Activated CD4-positive, alpha-beta T cell treated with anti-CD3 and anti-CD28 coated beads for 36 hours (primary cell): ENCODE measurements at regions of chr1 and their contacts with region 1.

Region 1: DNA sequence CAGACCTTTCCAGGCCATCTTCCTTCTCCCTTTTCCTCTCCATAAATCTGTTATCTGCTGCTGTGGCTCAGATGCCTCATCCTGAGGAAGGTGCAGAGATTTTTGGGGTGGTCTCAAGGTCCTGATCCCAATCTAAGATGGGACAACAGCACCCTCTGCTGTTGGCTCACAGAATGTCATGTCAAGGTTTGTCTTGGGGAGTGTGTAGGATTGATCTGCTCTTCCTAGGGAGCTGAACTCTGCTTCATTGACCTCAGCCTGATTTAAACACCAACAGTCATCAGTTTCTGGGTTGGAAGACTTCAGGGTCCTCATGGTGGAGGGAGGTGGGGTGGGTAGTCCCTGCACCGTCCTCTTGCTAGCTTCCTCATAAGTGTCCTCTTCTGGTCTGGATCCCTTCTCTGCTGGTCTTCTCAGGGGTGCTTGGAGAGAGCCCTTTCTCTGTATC is 62.8 kb upstream of the LAX1 start:
- DNase-seq: peak; percentile 75
- ATAC-seq: peak; percentile 79
- H3K4me3 Mint-ChIP-seq: no peak overlapping the region
- H3K27ac Mint-ChIP-seq: peak overlapping the region; percentile 76
- H3K4me1 Mint-ChIP-seq: peaks cover 2% of the 10 kb centered on the region
- H3K27me3 Mint-ChIP-seq: no peaks in the 10 kb centered on the region

Region 2: DNA sequence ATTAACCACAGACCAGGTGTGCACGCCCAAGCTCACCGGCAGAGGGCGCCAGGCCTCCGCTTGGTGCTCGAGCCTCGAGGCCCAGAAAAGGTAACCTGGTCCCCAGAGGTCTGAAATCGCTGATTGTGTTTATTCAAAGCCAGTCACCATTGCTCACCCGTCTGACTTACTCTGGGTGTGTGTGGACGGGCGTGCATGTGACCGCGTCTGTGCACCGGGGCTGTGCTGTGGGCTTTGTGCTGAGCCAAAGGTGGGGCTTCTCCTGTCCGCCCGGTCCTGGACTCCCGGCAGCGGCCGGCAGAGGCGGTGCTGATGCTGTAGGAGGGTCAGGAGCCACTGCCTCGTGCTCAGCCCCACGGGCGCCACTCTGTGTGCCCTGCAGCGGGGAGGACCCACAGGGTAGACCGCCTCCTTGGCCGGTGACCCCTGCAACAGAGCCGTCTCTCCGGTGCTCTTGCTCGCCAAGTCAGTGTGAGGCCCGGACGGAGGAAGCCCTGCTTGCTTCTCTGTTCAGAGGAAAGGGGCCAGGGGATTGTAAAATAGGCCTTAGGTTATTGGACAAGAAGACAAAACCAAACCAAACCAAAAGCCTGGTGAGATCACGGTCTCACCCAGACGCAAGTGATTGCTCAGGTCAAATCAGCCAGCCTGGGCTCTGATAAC is 428.8 kb before region 1 on chr1:
- CTCF ChIA-PET with region 1: no interaction called
- POLR2A ChIA-PET with region 1: no interaction called
- intact Hi-C with region 1: loop called in 1 of 2 experiments (anchors 5 kb)
- DNase-seq: peak; percentile 96
- ATAC-seq: peak; percentile 78
- H3K4me3 Mint-ChIP-seq: peak overlapping the region; percentile 70
- H3K27ac Mint-ChIP-seq: peak overlapping the region; percentile 78
- H3K4me1 Mint-ChIP-seq: peaks cover 65% of the 10 kb centered on the region
- H3K27me3 Mint-ChIP-seq: no peaks in the 10 kb centered on the region

Region 3: DNA sequence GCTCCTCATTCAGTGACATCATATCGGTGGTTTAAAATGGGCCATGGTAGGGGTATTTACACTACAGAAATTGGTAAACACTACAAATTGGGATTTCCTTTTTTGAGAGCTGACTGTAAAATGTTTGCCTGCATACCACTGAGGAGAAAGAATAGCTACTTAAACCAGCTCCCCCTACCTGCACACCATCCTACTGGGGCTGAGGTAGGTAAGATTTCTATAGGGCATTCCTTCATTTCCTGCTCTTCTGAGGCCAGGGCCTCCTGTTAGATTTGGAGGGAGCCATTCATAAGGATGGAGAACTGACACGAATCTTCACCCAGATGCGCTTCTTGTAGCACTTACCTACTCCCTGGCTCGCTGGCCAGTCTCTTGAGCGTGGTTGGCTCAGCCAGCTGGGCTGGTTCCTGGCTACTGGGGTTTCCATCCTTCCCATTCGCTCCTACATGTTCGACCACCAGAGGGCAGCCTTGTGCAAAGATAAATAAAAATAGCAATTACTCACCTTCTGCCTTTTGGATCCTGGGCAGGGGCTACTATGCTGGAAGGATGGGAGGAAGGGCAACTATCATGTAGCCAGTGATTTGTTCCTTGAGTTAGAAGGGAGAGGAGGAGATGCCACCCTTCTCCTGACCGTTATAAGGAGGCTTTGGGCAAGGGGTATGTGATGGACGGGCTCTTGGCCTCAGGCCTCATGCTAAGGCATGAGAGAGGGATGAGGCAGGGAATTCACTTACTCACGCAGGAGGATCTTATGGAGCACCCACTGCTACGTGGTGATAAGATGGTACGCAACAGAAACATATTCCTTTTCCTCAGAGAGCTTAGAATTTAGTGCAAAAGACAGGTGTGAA is 197.5 kb before region 1 on chr1:
- CTCF ChIA-PET with region 1: interaction called, 134 read pairs
- POLR2A ChIA-PET with region 1: interaction called, 3 read pairs
- intact Hi-C with region 1: loop called (anchors 1 kb)
- DNase-seq: peak; percentile 83
- ATAC-seq: peak; percentile 75
- H3K4me3 Mint-ChIP-seq: no peak overlapping the region
- H3K27ac Mint-ChIP-seq: no peak overlapping the region
- H3K4me1 Mint-ChIP-seq: peaks cover 4% of the 10 kb centered on the region
- H3K27me3 Mint-ChIP-seq: peaks cover 2% of the 10 kb centered on the region

Region 4: DNA sequence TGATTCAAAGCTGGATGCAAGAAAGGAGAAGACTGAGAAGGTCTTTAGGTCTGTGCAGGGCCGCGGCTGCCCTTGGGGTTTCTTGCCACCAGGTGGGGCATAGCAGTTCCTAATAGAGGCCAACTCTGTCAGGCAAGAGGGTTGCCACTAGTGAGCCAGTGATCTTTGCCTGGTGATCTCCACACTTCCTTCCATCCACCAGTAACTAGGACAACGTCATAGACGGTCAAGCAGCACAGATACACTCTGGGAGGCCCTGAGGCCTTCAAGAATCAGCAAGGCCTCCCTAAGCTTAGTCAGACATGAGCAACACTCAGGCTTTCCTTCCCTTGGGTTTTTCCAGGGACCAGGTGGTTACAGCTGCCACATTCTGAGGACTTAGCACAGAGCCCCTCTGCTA is 108.4 kb before region 1 on chr1:
- CTCF ChIA-PET with region 1: interaction called, 45 read pairs
- POLR2A ChIA-PET with region 1: no interaction called
- intact Hi-C with region 1: loop called in 1 of 2 experiments (anchors 1 kb)
- DNase-seq: peak; percentile 76
- ATAC-seq: peak; percentile 92
- H3K4me3 Mint-ChIP-seq: no peak overlapping the region
- H3K27ac Mint-ChIP-seq: peak overlapping the region; percentile 30
- H3K4me1 Mint-ChIP-seq: peaks cover 15% of the 10 kb centered on the region
- H3K27me3 Mint-ChIP-seq: no peaks in the 10 kb centered on the region

Region 5: GRCh38 chr1:203673550-203674427 is 28.4 kb before region 1 on chr1:
- CTCF ChIA-PET with region 1: interaction called, 21 read pairs
- POLR2A ChIA-PET with region 1: no interaction called
- intact Hi-C with region 1: loop called in 1 of 2 experiments (anchors 1 kb)
- DNase-seq: peak; percentile 81
- ATAC-seq: peak; percentile 95
- H3K4me3 Mint-ChIP-seq: peak overlapping the region; percentile 56
- H3K27ac Mint-ChIP-seq: peak overlapping the region; percentile 83
- H3K4me1 Mint-ChIP-seq: peaks cover 65% of the 10 kb centered on the region
- H3K27me3 Mint-ChIP-seq: no peaks in the 10 kb centered on the region

Region 6: DNA sequence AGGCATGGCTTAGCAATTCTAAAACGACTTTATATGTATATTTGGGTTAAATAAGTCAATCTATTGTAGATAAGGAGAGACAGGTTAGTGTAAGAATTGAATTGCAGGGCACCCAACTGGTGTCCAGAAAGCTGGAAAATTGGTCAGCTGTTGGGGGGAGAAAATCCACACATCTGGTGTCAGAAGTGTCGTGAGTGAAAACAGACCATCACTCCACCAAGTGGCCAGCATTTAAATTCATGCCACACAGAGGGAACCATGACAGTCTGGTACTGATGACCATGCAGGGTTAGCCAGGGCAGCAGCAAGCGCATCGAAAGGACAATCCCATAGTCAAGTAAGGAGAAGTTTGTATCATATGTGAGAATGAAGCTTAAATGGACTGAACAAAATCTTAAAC is 74.5 kb after region 1 on chr1:
- CTCF ChIA-PET with region 1: interaction called, 10 read pairs
- POLR2A ChIA-PET with region 1: no interaction called
- intact Hi-C with region 1: no loop called
- DNase-seq: no peak
- ATAC-seq: peak; percentile 23
- H3K4me3 Mint-ChIP-seq: no peak overlapping the region
- H3K27ac Mint-ChIP-seq: peak overlapping the region; percentile 74
- H3K4me1 Mint-ChIP-seq: peaks cover 12% of the 10 kb centered on the region
- H3K27me3 Mint-ChIP-seq: no peaks in the 10 kb centered on the region

Region 7: DNA sequence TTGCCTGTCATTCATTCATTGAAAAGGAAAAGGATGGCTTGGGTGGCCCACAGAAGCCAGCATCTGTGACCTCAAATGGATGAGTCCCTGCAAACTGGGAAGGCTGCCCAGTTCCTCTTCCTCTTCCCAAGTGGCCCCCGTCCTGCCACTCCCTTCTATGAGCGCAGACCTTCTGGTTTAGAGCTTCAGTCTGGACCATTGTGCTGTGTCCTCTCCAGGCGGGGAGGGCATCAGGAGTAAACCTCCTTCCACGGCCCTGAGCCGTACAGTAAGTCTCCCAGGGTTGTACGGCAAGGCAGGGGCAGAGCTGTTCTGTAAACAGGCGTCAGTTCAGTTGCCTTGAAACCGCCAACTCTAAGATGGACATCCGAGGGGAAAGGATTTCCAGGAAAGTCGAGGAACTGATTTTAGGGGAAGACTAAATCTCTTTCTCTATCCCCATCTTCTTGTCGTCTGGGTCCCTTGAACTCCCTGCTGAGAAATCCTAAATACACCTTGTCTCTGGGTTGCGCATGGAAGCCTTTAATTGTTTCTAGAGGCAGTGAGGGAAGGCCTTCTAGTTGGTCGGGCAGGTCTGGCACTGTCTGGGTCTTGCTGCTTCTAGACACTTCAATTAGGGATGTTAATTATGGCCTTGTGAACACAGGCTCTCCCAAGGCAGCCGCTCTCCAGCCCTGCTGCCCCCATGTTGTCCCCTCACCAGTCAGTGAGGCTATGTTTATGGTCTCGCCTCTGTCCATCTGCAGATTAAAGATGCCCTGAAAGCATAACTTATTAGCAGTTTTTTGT is 392.9 kb after region 1 on chr1:
- CTCF ChIA-PET with region 1: no interaction called
- POLR2A ChIA-PET with region 1: no interaction called
- intact Hi-C with region 1: no loop called
- DNase-seq: no peak
- ATAC-seq: no peak
- H3K4me3 Mint-ChIP-seq: no peak overlapping the region
- H3K27ac Mint-ChIP-seq: no peak overlapping the region
- H3K4me1 Mint-ChIP-seq: no peaks in the 10 kb centered on the region
- H3K27me3 Mint-ChIP-seq: no peaks in the 10 kb centered on the region